A673 (cell line): ENCODE measurements at regions of chr10 and their contacts with region 1.

Region 1: GRCh38 chr10:61814160-61814559 is 87.3 kb upstream of the ARID5B start:
- DNase-seq: no peak
- H3K4me3 ChIP-seq: no peak overlapping the region
- H3K27ac ChIP-seq: no peak overlapping the region
- H3K4me1 ChIP-seq: peaks cover 3% of the 10 kb centered on the region
- H3K27me3 ChIP-seq: no peaks in the 10 kb centered on the region
- CTCF ChIP-seq: no peak

Region 2: GRCh38 chr10:60834401-60834800 is 979.8 kb before region 1 on chr10:
- CTCF ChIA-PET with region 1: no interaction called
- POLR2A ChIA-PET with region 1: interaction called, 24 read pairs
- intact Hi-C with region 1: no loop called
- DNase-seq: no peak
- H3K4me3 ChIP-seq: no peak overlapping the region
- H3K27ac ChIP-seq: no peak overlapping the region
- H3K4me1 ChIP-seq: peaks cover 9% of the 10 kb centered on the region
- H3K27me3 ChIP-seq: no peaks in the 10 kb centered on the region
- CTCF ChIP-seq: no peak

Region 3: GRCh38 chr10:61688551-61689308 is 125.4 kb before region 1 on chr10:
- CTCF ChIA-PET with region 1: no interaction called
- POLR2A ChIA-PET with region 1: no interaction called
- intact Hi-C with region 1: no loop called
- DNase-seq: no peak
- H3K4me3 ChIP-seq: no peak overlapping the region
- H3K27ac ChIP-seq: no peak overlapping the region
- H3K4me1 ChIP-seq: peaks cover 8% of the 10 kb centered on the region
- H3K27me3 ChIP-seq: no peaks in the 10 kb centered on the region
- CTCF ChIP-seq: no peak

Region 4: GRCh38 chr10:62025901-62026879 is 212.0 kb after region 1 on chr10:
- CTCF ChIA-PET with region 1: no interaction called
- POLR2A ChIA-PET with region 1: no interaction called
- intact Hi-C with region 1: no loop called
- DNase-seq: no peak
- H3K4me3 ChIP-seq: no peak overlapping the region
- H3K27ac ChIP-seq: no peak overlapping the region
- H3K4me1 ChIP-seq: peaks cover 18% of the 10 kb centered on the region
- H3K27me3 ChIP-seq: no peaks in the 10 kb centered on the region
- CTCF ChIP-seq: no peak

Region 5: GRCh38 chr10:62205750-62206399 is 391.7 kb after region 1 on chr10:
- CTCF ChIA-PET with region 1: no interaction called
- POLR2A ChIA-PET with region 1: no interaction called
- intact Hi-C with region 1: no loop called
- DNase-seq: no peak
- H3K4me3 ChIP-seq: no peak overlapping the region
- H3K27ac ChIP-seq: no peak overlapping the region
- H3K4me1 ChIP-seq: no peaks in the 10 kb centered on the region
- H3K27me3 ChIP-seq: no peaks in the 10 kb centered on the region
- CTCF ChIP-seq: no peak